ENCODE measurements at regions of chr19 and their contacts with region 1.

Region 1: GRCh38 chr19:1082172-1082927 is 12.8 kb downstream of the POLR2E start:
- DNase-seq: peak; percentile 75 to 94 (median 84)
- ATAC-seq: peak; percentile 76
- H3K4me3 ChIP-seq: no peak overlapping the region
- H3K4me3 Mint-ChIP-seq: peak overlapping the region; percentile 55
- H3K27ac ChIP-seq: peak overlapping the region; percentile 42 to 54
- H3K27ac Mint-ChIP-seq: peak overlapping the region; percentile 82
- H3K4me1 ChIP-seq: peaks cover 84% of the 10 kb centered on the region
- H3K4me1 Mint-ChIP-seq: peaks cover 40% of the 10 kb centered on the region
- H3K27me3 ChIP-seq: no peaks in the 10 kb centered on the region
- H3K27me3 Mint-ChIP-seq: no peaks in the 10 kb centered on the region
- CTCF ChIP-seq: no peak

Region 2: DNA sequence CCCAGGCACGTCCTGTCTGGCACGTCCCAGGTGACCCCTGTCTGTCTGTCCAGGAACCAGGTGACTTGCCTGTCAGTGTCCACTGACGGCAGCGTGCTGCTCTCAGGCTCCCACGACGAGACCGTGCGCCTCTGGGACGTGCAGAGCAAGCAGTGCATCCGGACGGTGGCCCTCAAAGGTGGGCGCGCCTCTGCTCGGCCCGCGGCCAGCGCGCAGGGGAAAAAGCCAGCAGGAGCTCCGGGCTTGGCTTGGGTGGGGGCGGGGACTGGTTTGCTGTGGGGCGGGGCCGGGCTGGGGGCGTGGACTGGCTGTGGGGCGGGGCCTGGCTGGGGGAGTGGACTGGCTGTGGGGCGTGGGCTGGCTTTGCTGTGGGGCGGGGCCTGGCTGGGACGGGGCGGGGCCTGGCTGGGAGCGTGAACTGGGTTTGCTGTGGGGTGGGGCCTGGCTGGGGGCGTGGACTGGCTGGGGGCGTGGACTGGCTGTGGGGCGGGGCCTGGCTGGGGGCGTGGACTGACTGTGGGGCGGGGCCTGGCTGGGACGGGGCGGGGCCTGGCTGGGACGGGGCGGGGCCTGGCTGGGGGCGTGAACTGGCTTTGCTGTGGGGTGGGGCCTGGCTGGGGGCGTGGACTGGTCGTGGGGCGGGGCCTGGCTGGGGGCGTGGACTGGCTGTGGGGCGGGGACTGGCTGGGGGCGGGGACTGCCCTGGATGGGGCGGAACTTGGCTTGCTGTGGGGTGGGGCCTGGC is 91.0 kb before region 1 on chr19:
- CTCF ChIA-PET with region 1: no interaction called
- POLR2A ChIA-PET with region 1: no interaction called
- intact Hi-C with region 1: no loop called
- DNase-seq: peak in 7 of 9 experiments; percentile 28 to 82 (median 68)
- ATAC-seq: peak; percentile 80
- H3K4me3 ChIP-seq: no peak overlapping the region
- H3K4me3 Mint-ChIP-seq: no peak overlapping the region
- H3K27ac ChIP-seq: no peak overlapping the region
- H3K27ac Mint-ChIP-seq: no peak overlapping the region
- H3K4me1 ChIP-seq: peaks cover 10% of the 10 kb centered on the region
- H3K4me1 Mint-ChIP-seq: peaks cover 2% of the 10 kb centered on the region
- H3K27me3 ChIP-seq: no peaks in the 10 kb centered on the region
- H3K27me3 Mint-ChIP-seq: no peaks in the 10 kb centered on the region
- CTCF ChIP-seq: no peak

Region 3: DNA sequence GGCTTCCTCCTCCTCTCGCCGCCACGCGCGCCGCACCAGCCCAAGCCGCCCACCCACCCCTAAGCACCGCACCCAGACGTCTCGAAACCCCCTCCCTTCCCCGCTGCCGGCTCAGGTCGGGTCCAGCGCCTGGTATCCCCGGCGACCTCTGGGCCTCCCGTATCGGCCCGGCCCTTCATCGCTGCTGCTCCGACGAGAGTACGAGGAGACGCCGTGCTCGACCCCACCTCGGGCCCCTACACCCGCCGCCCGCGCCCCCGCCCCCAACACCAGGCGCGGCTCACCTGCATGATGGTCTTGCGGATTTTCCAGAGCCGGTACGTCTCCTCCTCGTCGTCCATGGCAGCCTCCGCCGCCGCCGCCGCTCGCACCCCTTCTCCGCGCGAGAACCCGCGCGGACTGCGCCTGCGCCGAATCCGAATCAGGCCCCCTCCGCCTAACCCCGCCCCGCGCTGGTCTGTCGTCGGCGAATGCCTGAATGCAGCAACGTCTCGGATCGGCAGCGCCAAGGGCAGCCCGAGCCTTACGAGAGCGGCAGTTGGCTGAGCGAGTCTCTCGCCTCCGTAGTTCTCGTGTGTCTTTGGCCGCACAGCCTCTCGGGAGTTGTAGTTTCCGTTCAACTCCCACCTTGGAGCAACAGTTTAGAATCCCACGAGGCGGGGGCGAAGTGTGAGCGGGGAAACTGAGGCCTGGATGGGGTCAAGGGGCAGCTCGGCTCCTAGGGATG is 12.8 kb after region 1 on chr19 and contains the start of gene POLR2E:
- CTCF ChIA-PET with region 1: interaction called, 80 read pairs
- POLR2A ChIA-PET with region 1: interaction called, 1,023 read pairs
- intact Hi-C with region 1: no loop called
- DNase-seq: peak; percentile 97 to 99 (median 99)
- ATAC-seq: peak; percentile 93
- H3K4me3 ChIP-seq: peak within 1 kb of the TSS; percentile 79 to 86
- H3K4me3 Mint-ChIP-seq: peak within 1 kb of the TSS; percentile 94
- H3K27ac ChIP-seq: peak within 1 kb of the TSS; percentile 58 to 64
- H3K27ac Mint-ChIP-seq: peak within 1 kb of the TSS; percentile 90
- H3K4me1 ChIP-seq: peaks cover 51% of the 10 kb centered on the region
- H3K4me1 Mint-ChIP-seq: peaks cover 41% of the 10 kb centered on the region
- H3K27me3 ChIP-seq: no peaks in the 10 kb centered on the region
- H3K27me3 Mint-ChIP-seq: no peaks in the 10 kb centered on the region
- CTCF ChIP-seq: no peak
- total RNA-seq, gene POLR2E: 75.3 to 76.2 TPM

Region 4: DNA sequence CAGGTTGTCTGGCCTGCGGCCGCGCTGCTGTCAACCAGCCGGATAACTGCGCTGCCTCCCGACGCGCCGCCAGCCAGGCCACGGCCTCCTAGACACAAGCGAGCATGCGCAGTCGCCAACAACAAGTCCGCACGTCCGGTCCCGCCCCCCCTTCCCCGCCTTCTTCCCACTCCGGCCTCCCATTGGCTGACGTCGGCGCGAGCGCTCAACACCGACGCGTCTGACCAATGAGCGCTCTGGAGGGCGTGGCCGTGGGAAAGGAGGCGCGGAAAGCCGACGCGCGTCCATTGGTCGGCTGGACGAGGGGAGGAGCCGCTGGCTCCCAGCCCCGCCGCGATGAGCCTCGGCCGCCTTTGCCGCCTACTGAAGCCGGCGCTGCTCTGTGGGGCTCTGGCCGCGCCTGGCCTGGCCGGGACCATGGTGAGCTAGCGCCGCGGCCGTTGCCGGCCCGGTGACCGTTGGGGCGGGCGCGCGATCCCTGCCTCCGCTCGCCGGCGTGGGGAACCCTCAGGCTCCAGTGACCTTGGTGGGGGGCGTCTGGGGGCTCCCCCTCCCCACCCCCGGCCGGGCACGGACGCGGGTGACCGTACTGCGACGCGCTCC is 21.5 kb after region 1 on chr19 and contains the start of gene GPX4:
- CTCF ChIA-PET with region 1: no interaction called
- POLR2A ChIA-PET with region 1: interaction called, 58 read pairs
- intact Hi-C with region 1: no loop called
- DNase-seq: peak; percentile 96 to 100 (median 98)
- ATAC-seq: peak; percentile 88
- H3K4me3 ChIP-seq: peak within 1 kb of the TSS; percentile 73 to 93
- H3K4me3 Mint-ChIP-seq: peak within 1 kb of the TSS; percentile 76
- H3K27ac ChIP-seq: peak within 1 kb of the TSS; percentile 86
- H3K27ac Mint-ChIP-seq: peak within 1 kb of the TSS; percentile 92
- H3K4me1 ChIP-seq: peaks cover 46% of the 10 kb centered on the region
- H3K4me1 Mint-ChIP-seq: peaks cover 27% of the 10 kb centered on the region
- H3K27me3 ChIP-seq: no peaks in the 10 kb centered on the region
- H3K27me3 Mint-ChIP-seq: no peaks in the 10 kb centered on the region
- CTCF ChIP-seq: no peak
- total RNA-seq, gene GPX4: 172 to 174 TPM

Region 5: GRCh38 chr19:1116726-1117581 is 34.6 kb after region 1 on chr19:
- CTCF ChIA-PET with region 1: no interaction called
- POLR2A ChIA-PET with region 1: no interaction called
- intact Hi-C with region 1: no loop called
- DNase-seq: no peak
- ATAC-seq: no peak
- H3K4me3 ChIP-seq: no peak overlapping the region
- H3K4me3 Mint-ChIP-seq: no peak overlapping the region
- H3K27ac ChIP-seq: no peak overlapping the region
- H3K27ac Mint-ChIP-seq: no peak overlapping the region
- H3K4me1 ChIP-seq: peaks cover 14% of the 10 kb centered on the region
- H3K4me1 Mint-ChIP-seq: peaks cover 4% of the 10 kb centered on the region
- H3K27me3 ChIP-seq: no peaks in the 10 kb centered on the region
- H3K27me3 Mint-ChIP-seq: no peaks in the 10 kb centered on the region
- CTCF ChIP-seq: no peak

Region 6: GRCh38 chr19:1875646-1876495 is 793.5 kb after region 1 on chr19:
- CTCF ChIA-PET with region 1: no interaction called
- POLR2A ChIA-PET with region 1: no interaction called
- intact Hi-C with region 1: no loop called
- DNase-seq: peak; percentile 70 to 93 (median 87)
- ATAC-seq: peak; percentile 84
- H3K4me3 ChIP-seq: peak overlapping the region; percentile 82 to 98
- H3K4me3 Mint-ChIP-seq: peak overlapping the region; percentile 99
- H3K27ac ChIP-seq: peak overlapping the region; percentile 90 to 95
- H3K27ac Mint-ChIP-seq: peak overlapping the region; percentile 98
- H3K4me1 ChIP-seq: peaks cover 43% of the 10 kb centered on the region
- H3K4me1 Mint-ChIP-seq: peaks cover 31% of the 10 kb centered on the region
- H3K27me3 ChIP-seq: no peaks in the 10 kb centered on the region
- H3K27me3 Mint-ChIP-seq: no peaks in the 10 kb centered on the region
- CTCF ChIP-seq: no peak

Measured in CD8-positive, alpha-beta T cell (primary cell).